Tibial artery (tissue), 4 donors: ENCODE measurements at regions of chr5 and their contacts with region 1.

Region 1: DNA sequence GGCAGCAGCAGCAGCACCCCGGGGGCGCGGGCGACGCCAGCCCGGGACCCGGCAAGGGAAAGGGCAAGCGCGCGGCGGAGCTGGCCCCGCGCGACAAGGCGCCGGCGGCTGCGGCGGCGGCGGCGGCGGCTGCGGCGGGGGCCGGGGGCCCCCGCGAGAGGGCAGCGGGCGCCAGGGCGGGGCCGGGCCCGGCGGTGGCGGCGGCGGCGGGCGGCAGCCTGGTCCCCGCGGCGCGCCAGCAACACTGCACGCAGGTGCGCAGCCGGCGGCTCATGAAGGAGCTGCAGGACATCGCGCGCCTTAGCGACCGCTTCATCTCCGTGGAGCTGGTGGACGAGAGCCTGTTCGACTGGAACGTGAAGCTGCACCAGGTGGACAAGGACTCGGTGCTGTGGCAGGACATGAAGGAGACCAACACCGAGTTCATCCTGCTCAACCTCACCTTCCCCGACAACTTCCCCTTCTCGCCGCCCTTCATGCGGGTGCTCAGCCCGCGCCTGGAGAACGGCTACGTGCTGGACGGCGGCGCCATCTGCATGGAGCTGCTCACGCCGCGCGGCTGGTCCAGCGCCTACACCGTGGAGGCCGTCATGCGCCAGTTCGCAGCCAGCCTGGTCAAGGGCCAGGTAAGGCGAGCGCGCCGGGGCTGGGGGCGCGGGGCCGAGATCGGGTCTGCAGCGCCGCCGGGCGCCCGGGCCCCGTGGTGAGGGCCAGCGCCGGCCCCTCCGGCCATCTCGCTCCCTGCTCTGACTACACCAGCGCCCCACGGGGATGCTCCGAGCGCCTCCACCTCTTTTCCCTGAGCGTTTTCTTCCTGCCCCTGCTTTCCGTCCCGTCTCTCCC is at the start of gene UBE2QL1:
- DNase-seq: no peak
- H3K4me3 ChIP-seq: peak within 1 kb of the TSS; percentile 55 to 75
- H3K27ac ChIP-seq: peak within 1 kb of the TSS; percentile 11 to 25
- H3K4me1 ChIP-seq: peaks cover 0 to 37% (median 19%) of the 10 kb centered on the region in 4 donors
- H3K27me3 ChIP-seq: no peaks in the 10 kb centered on the region
- CTCF ChIP-seq: no peak

Region 2: DNA sequence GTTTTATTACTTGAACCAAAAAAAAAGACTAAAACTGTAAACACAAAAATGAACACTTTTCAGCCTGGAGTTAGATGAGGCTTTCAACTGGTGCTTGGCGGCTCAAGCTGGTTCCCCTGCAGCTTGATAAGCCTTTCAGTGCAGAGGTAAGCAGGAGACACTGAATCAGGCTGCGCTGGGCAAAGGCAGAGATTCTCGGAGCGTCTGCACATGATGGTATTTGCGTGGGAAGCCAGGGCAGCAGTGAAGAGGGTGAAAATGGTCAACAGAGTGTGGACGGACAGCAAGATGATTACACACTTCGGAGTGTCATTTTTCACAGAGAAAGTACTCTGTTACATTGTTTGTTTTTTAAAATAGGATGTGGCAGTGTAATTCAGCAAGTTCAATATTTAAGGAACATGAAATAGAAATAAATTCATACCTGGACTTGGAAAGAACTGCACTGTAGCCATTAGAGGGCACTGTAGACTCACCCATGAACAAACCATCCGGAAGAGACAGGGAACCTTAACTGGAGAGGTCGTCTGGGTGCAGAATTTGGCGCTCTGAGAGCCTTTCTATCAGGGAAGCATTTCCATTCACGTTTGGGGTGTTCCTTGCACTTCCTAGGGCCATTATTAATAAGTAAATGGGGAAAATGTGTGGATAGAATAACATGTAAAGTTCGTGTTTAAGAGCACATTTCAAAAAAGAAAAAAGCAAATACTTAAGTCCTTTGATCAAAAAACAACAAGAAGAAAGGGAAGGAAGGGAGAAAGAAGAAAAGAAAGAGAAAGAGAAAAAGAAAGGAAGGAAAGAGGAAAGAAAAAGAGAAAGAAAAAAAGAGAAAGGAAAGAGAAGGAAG is 956.5 kb before region 1 on chr5:
- intact Hi-C with region 1: loop called (anchors 10 kb)
- DNase-seq: no peak
- H3K4me3 ChIP-seq: no peak overlapping the region
- H3K27ac ChIP-seq: no peak overlapping the region
- H3K4me1 ChIP-seq: peaks cover 3 to 26% (median 9%) of the 10 kb centered on the region in 4 donors
- H3K27me3 ChIP-seq: no peaks in the 10 kb centered on the region
- CTCF ChIP-seq: peak; percentile 54 to 73

Region 3: DNA sequence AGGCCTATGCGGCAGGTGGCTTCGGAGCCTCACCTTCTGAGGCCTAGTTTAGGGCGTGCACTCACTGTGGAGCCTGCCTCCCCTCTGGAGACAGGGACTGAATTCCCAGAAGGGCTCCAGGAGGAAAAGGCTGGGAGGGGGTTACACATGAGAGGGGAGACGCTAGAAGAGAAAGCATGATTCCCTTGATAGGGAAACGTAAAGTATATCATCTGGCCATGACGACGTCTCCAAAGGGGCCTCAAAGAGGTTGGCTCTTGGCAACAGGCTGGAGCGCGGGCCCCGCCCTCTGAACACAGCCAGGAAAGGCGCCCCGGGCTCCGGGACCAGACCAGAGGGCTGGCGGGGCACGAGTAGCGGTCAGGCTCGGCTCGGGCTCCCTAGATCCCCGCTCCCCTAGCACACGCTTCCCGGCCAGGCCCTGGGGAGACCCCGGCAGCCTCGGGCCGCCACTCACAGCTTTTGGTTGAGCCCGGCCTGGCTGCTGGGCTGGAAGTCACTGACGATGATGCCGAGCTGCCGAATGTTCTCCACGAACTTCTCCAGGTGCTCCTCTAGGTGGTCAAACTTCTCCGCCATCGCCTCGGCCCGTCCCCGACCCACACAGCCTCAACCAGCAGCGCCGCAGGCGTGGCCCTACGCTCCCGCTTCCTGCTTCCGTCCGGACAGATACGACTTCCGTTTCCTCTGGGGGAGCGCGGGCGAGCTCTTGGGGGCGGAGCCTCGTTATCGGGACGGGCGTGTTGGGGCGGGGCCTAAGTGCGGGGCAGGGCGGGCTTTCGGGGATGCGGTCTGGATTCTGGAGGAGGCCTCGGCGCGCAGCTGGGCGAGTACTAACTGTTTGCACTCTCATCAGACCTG is 70.7 kb before region 1 on chr5 and contains the start of gene MED10:
- intact Hi-C with region 1: loop called (anchors 5 kb)
- DNase-seq: peak; percentile 93 to 98
- H3K4me3 ChIP-seq: peak within 1 kb of the TSS; percentile 94 to 99
- H3K27ac ChIP-seq: peak within 1 kb of the TSS; percentile 90 to 91
- H3K4me1 ChIP-seq: peaks cover 0 to 19% (median 16%) of the 10 kb centered on the region in 4 donors
- H3K27me3 ChIP-seq: no peaks in the 10 kb centered on the region
- CTCF ChIP-seq: no peak

Region 4: GRCh38 chr5:6545770-6546690 is 97.2 kb after region 1 on chr5:
- intact Hi-C with region 1: no loop called
- DNase-seq: peak in 1 of 2 donors; percentile 75
- H3K4me3 ChIP-seq: no peak overlapping the region
- H3K27ac ChIP-seq: peak overlapping the region in 1 of 2 donors; percentile 8
- H3K4me1 ChIP-seq: peaks cover 0 to 15% (median 4%) of the 10 kb centered on the region in 4 donors
- H3K27me3 ChIP-seq: no peaks in the 10 kb centered on the region
- CTCF ChIP-seq: no peak

Region 5: DNA sequence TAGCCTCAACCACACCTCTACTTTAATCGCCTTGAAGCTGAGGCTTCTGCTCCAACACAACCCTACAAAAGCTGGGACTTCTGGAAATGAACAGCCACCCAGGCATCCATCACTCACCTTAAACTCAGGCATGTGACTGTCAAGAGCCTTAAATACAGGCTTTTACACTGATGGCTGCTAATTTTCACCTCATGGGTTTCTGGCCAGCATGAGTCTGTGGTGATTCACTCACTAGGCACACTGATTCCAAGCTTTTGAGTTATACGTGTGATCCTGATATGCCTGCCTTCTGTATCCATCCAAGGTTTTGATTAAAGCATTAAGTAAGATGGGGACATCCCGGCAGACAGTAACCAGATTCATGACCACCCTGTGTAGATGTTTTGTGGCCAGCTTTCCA is 175.1 kb after region 1 on chr5:
- intact Hi-C with region 1: no loop called
- DNase-seq: no peak
- H3K4me3 ChIP-seq: no peak overlapping the region
- H3K27ac ChIP-seq: no peak overlapping the region
- H3K4me1 ChIP-seq: no peaks in the 10 kb centered on the region
- H3K27me3 ChIP-seq: no peaks in the 10 kb centered on the region
- CTCF ChIP-seq: no peak

Region 6: GRCh38 chr5:6712577-6713275 is 263.9 kb after region 1 on chr5:
- intact Hi-C with region 1: loop called (anchors 10 kb)
- DNase-seq: peak; percentile 95 to 98
- H3K4me3 ChIP-seq: peak overlapping the region; percentile 79 to 80
- H3K27ac ChIP-seq: peak overlapping the region; percentile 84 to 97
- H3K4me1 ChIP-seq: peaks cover 0 to 39% (median 38%) of the 10 kb centered on the region in 4 donors
- H3K27me3 ChIP-seq: no peaks in the 10 kb centered on the region
- CTCF ChIP-seq: peak in 1 of 2 experiments; percentile 20